ENCODE measurements at regions of chr11 and their contacts with region 1.

Region 1: GRCh38 chr11:66466225-66467027 is at the start of gene PELI3:
- DNase-seq: peak; percentile 95
- ATAC-seq: peak; percentile 91
- H3K4me3 Mint-ChIP-seq: peak within 1 kb of the TSS; percentile 80
- H3K27ac Mint-ChIP-seq: peak within 1 kb of the TSS; percentile 75
- H3K4me1 Mint-ChIP-seq: peaks cover 27% of the 10 kb centered on the region
- H3K27me3 Mint-ChIP-seq: no peaks in the 10 kb centered on the region
- total RNA-seq, gene PELI3: 4.1 to 5.7 TPM

Region 2: GRCh38 chr11:66480117-66480938 is 13.9 kb after region 1 on chr11 and contains the start of gene DPP3:
- CTCF ChIA-PET with region 1: interaction called, 43 read pairs
- DNase-seq: peak; percentile 98
- ATAC-seq: peak; percentile 98
- H3K4me3 Mint-ChIP-seq: peak within 1 kb of the TSS; percentile 91
- H3K27ac Mint-ChIP-seq: peak within 1 kb of the TSS; percentile 93
- H3K4me1 Mint-ChIP-seq: peaks cover 33% of the 10 kb centered on the region
- H3K27me3 Mint-ChIP-seq: no peaks in the 10 kb centered on the region
- total RNA-seq, gene DPP3: 54.2 to 79.6 TPM